Calu3 (cell line): ENCODE measurements at regions of chr9 and their contacts with region 1.

Region 1: DNA sequence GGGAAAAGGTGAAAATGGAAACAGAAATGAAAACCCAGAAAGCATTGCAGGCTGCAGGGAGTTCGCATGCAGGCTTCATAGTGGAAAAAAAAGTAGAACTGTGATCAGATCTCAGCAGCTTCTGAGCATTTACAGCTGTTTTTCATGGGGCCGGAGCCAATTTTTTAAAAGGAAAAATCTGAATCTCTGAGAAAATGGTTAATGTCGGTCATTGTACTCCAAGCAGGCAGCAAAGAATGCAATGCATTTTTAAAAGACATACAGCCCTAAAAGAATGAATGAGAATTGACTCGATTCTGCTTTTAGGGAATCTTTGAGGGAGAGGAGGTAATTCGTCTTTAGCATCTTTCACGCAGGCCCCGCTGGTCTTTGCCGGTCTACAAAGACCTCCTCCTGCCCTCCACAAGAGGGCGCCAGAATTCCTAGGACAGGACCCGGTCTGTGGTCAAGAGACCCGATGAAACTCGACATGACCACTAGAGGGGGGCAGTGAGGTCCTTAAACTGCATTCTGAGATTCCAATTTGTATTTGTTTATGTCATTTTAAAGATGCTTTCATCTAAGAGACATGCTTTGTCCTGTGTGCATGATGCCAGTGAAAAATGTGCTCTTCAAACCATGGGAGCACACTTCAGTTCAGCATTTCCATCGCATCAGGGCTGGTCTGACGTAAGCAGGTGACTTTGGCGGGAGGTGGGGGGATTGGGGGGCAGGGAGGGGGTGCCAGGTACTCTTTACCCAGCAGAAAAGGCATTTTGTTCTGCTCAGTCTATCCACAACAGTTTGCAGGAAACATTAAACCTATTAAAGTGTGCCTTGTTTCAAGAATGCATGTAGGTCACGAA is 43.7 kb upstream of the TMEM252 start:
- DNase-seq: peak; percentile 84
- H3K4me3 Mint-ChIP-seq: no peak overlapping the region
- H3K27ac Mint-ChIP-seq: no peak overlapping the region
- H3K4me1 Mint-ChIP-seq: peaks cover 8% of the 10 kb centered on the region
- H3K27me3 Mint-ChIP-seq: peaks cover 19% of the 10 kb centered on the region
- CTCF ChIP-seq: peak; percentile 88

Region 2: GRCh38 chr9:68522131-68522530 is 62.3 kb before region 1 on chr9:
- CTCF ChIA-PET with region 1: no interaction called
- intact Hi-C with region 1: no loop called
- DNase-seq: no peak
- H3K4me3 Mint-ChIP-seq: no peak overlapping the region
- H3K27ac Mint-ChIP-seq: peak overlapping the region; percentile 72
- H3K4me1 Mint-ChIP-seq: peaks cover 26% of the 10 kb centered on the region
- H3K27me3 Mint-ChIP-seq: no peaks in the 10 kb centered on the region
- CTCF ChIP-seq: no peak

Region 3: DNA sequence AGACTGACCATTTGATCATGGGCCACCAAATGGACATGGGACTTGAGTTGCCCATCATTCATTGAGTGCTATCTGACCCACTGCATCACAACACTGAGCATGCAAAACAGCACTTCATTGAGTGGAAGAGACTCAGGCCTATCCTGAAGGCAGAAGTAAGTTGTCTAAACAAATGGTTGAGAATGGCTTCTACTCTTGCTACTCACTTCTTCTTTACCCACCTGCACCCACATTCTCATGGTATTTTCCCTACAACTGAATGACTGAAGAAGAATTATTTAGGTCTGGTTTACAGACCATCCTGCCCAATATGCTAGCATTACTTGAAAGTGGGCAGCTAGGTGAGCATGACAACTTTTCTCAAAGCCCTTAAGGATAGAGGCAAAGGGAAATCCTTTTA is 79.6 kb after region 1 on chr9:
- CTCF ChIA-PET with region 1: no interaction called
- intact Hi-C with region 1: no loop called
- DNase-seq: no peak
- H3K4me3 Mint-ChIP-seq: no peak overlapping the region
- H3K27ac Mint-ChIP-seq: no peak overlapping the region
- H3K4me1 Mint-ChIP-seq: no peaks in the 10 kb centered on the region
- H3K27me3 Mint-ChIP-seq: peaks cover 20% of the 10 kb centered on the region
- CTCF ChIP-seq: no peak

Region 4: DNA sequence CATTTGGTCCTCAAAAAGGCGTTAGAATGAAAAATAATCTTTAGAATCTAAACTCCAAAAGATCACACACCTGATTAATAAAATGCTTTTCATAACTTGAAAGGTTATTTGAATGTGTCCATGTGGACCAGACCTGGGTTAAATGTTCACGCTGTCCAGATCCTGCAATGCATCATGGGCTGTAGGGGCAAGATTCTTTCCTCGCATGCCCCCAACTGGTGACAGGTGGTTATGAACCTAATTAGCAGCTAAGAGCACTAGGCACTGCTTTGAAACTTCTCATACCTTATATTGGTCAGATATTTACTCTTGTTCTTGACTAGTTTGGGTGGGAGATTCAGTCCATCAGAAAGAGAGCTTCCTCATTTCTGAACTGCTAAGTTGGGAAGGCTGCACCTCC is 101.4 kb after region 1 on chr9:
- CTCF ChIA-PET with region 1: no interaction called
- intact Hi-C with region 1: loop called (anchors 1 kb)
- DNase-seq: peak; percentile 58
- H3K4me3 Mint-ChIP-seq: no peak overlapping the region
- H3K27ac Mint-ChIP-seq: no peak overlapping the region
- H3K4me1 Mint-ChIP-seq: peaks cover 12% of the 10 kb centered on the region
- H3K27me3 Mint-ChIP-seq: no peaks in the 10 kb centered on the region
- CTCF ChIP-seq: no peak

Region 5: GRCh38 chr9:68822596-68823165 is 238.3 kb after region 1 on chr9:
- CTCF ChIA-PET with region 1: no interaction called
- intact Hi-C with region 1: no loop called
- DNase-seq: no peak
- H3K4me3 Mint-ChIP-seq: no peak overlapping the region
- H3K27ac Mint-ChIP-seq: no peak overlapping the region
- H3K4me1 Mint-ChIP-seq: no peaks in the 10 kb centered on the region
- H3K27me3 Mint-ChIP-seq: no peaks in the 10 kb centered on the region
- CTCF ChIP-seq: no peak

Region 6: DNA sequence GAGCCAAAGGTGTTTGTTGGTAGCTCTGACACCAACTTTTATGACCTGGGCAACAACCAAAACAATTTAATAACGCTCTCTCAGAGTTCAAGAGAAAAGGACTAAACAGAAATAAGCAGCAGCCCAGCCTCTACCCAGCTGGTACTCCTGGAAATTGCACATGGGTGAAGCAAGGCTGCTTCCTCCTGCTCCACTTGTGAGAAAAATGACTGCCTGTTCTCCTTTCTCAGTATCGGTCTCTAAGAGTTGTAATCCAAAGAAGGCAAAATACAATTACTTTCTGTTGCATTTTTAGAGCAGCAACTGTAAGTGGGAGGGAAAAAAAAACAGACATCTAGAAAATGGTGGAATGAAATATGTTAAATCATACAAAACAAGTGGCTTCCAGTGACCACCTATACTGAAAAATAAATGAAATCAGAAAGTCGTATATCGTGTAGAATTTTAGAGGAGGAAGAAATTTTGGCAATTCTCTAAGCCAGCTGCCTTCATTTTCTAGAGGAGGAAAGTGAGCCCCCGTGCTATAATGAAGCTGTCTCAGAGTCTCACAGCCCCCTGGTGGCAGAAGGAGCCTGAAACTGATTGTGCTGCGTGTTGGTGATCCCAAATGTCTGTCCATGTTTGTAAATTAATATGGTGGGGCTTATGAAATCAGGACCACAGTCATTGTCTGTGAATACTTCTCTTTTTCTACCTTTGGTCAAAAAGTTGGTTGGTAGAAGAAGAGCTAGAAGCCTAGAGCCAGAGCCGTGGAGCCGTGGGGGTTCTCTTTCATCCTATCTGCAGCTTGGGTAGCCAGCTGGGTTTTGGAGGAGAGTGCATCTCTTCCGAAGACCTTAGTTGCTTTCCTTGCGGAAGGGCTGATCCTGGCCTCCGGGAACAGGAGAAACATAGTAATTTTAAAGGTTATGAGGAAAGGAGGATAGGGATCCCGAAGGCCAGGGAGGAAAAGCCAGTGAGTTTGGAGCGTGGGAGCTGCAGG is 260.5 kb after region 1 on chr9:
- CTCF ChIA-PET with region 1: no interaction called
- intact Hi-C with region 1: loop called (anchors 10 kb)
- DNase-seq: peak; percentile 37
- H3K4me3 Mint-ChIP-seq: no peak overlapping the region
- H3K27ac Mint-ChIP-seq: no peak overlapping the region
- H3K4me1 Mint-ChIP-seq: no peaks in the 10 kb centered on the region
- H3K27me3 Mint-ChIP-seq: no peaks in the 10 kb centered on the region
- CTCF ChIP-seq: no peak

Region 7: DNA sequence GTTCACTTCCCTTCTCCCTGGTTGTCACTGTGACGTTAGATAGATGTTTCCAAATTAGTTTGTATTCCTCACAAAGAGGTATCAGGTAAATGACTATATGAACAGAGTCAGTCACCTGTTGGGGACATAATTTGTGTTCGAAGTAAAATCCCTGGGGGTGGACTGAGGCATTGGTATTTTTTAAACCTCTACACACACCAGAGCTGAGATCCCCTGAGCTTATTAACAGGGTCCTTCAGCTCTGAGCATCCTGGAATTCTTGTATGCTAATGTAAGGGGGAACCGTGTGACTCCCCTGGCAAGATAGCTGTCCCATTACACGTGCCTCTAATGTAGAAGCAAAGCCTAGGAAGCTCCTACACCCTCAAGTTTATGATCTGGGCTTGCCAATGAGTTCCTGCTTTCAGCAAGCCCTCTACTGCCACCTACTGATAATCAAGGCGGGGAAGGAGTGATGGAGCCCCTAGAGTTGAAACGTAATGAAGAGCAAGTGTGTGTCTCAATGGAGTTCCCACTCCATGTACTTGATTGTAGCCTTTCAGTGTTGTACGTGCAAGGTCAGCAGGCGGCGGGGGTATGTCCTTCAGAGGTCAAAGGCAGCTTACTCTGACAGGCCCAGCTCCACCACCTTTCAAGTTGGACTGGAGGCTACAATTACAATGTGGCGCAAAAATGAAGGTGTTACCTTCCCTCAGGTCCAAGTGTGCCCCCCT is 415.1 kb after region 1 on chr9:
- CTCF ChIA-PET with region 1: interaction called, 3 read pairs
- intact Hi-C with region 1: loop called (anchors 1 kb)
- DNase-seq: peak; percentile 66
- H3K4me3 Mint-ChIP-seq: no peak overlapping the region
- H3K27ac Mint-ChIP-seq: no peak overlapping the region
- H3K4me1 Mint-ChIP-seq: no peaks in the 10 kb centered on the region
- H3K27me3 Mint-ChIP-seq: no peaks in the 10 kb centered on the region
- CTCF ChIP-seq: peak; percentile 72